ENCODE measurements at regions of chr3 and their contacts with region 1.

Region 1: DNA sequence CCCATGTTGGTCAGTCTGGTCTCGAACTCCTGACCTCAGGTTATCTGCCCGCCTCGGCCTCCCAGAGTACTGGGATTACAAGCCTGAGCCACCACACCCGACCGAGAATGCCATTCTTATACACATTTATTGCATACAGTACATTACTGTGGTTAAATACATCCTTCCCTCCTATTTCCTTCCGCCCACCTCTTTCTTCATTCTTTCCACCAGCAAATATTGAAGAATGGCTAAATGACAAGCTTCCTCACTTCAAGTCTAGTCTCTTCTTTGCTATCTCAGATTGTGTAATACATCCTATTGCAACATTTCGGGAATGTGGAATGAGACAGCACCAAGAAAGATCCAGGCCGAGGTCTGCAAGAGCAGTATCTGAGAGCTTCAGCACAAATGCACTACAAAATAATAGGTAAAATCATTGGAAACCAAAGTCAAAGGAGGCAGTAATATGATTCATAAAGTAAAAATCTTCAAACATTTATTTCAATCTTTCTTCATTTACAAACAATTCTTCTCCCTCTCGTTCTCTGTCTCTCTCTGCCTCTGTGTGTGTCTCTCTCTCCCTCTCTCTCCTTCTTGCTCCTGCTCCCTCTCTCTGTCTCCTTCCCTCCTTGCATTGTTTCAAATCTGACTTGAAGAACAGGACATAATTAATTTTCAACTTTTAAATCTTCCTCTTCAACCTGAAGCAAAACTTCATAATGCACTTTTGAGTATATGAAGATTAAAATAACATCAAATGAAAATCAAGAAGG is 94.7 kb upstream of the TGFBR2 start:
- H3K4me3 Mint-ChIP-seq: no peak overlapping the region
- H3K27ac Mint-ChIP-seq: peak overlapping the region; percentile 8
- H3K4me1 Mint-ChIP-seq: peaks cover 21% of the 10 kb centered on the region
- H3K27me3 Mint-ChIP-seq: no peaks in the 10 kb centered on the region

Region 2: DNA sequence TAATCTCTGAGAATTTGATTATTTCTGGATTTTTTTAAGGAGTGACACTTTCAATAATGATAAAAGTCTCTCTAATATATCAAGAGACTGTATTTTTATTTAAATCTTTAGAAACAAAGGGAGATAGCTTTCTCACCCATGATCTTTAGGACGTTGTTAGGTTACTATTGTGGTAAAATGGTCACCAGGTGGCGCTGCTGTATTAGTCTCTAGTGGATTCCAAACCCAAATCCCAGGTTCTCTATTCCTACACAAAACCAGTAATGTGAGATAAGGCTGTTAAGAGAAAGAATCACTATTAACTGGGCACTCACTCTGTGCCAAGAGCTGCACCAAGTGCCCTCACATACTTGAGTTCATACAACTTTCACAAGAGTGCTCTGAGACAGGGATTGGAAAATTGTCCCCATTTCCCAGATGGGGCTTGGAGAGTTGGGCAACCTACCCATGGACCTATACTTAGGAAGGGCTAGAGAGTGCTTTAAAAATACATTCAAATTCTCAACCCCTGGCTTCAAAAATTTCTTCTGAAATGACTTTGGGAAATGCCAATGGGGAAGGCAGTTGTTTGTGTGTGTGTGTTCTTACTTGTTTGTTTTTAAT is 498.7 kb before region 1 on chr3:
- intact Hi-C with region 1: loop called (anchors 5 kb)
- H3K4me3 Mint-ChIP-seq: no peak overlapping the region
- H3K27ac Mint-ChIP-seq: no peak overlapping the region
- H3K4me1 Mint-ChIP-seq: no peaks in the 10 kb centered on the region
- H3K27me3 Mint-ChIP-seq: no peaks in the 10 kb centered on the region

Region 3: DNA sequence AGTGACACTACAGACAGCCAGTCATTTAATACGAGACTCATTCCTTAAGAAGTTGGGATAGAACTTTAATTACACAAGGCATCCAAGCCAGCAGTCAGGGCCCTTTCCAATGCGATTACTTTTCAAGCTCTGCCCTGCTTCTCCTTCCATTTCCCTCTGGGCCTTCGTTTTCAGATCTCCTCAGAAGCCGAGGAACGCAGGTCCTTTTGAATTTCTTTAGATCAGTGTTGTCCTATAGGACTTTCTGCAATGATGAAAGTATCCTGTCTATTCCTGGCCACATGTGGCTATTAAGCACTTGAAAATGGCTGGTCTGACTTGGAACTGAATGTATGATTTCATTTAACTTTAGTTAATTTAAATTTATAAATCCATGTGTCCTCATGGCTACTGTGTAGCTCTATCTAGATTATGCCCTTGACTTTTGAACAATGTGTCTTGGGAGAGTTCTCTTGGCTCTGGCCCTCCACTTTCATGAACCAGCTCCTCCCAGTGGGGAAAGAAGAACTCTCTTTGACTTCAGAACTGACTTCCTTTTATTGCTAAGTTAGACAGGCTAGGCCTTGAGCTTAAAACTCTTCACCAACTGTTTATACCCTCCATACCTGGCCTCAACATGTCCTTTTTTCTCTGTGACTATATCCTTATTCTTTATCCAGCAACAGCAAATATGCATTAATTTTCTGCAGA is 117.3 kb after region 1 on chr3:
- intact Hi-C with region 1: no loop called
- H3K4me3 Mint-ChIP-seq: peak overlapping the region; percentile 23
- H3K27ac Mint-ChIP-seq: peak overlapping the region; percentile 76
- H3K4me1 Mint-ChIP-seq: peaks cover 68% of the 10 kb centered on the region
- H3K27me3 Mint-ChIP-seq: no peaks in the 10 kb centered on the region

Measured in dendritic cell treated with granulocyte-macrophage colony-stimulating factor and Interleukin-4, amounts not matched to agents 40 ng/mL and 50 ng/mL, for 4 days (primary cell).